ENCODE measurements at regions of chr10 and their contacts with region 1.

Region 1: DNA sequence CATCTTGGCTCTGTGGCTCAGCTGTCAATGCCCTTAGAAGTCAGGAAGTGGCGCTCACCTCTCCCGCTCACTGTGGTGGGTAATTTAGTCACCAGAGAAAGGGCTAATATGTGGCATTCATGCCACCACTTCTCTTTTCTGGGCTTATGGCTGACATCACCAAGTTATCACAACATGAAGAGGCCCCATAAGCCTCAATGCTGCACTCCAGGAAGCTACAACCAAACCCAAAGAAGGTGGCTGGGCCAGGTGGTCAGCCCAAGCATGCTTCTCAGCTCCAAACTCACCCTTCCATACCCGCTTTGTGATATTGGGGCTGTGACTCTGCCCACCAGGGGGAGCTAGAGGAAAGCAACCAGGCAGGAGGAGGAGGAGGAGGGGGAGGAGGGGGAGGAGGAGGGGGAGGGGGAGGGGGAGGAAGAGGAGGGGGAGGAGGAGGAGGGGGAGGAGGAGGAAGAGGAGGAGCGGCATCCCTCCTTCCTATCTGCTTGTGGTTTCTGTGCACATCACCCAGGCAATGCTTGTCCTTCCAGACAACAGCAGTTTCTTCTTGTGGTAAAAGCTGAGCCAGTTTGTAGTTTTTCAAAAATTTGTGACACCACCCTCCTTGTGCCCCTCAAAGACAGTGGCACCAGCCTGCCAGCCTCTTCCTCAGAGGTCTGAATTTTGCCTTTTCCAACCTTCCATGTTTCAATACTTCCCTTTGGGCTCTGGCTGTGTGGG is 42.1 kb downstream of the CYP26A1 start:
- DNase-seq: peak; percentile 74 to 76
- H3K4me3 ChIP-seq: no peak overlapping the region
- H3K27ac ChIP-seq: no peak overlapping the region
- H3K4me1 ChIP-seq: no peaks in the 10 kb centered on the region
- H3K27me3 ChIP-seq: peaks cover 0 to 5% (median 0%) of the 10 kb centered on the region in 3 donors
- CTCF ChIP-seq: peak in 2 of 7 experiments; percentile 23 to 54
- EP300 ChIP-seq: no peak
- POLR2A ChIP-seq: no peak

Region 2: GRCh38 chr10:93288654-93289634 is 173.1 kb after region 1 on chr10:
- intact Hi-C with region 1: loop called (anchors 10 kb)
- DNase-seq: peak; percentile 77 to 91
- H3K4me3 ChIP-seq: no peak overlapping the region
- H3K27ac ChIP-seq: no peak overlapping the region
- H3K4me1 ChIP-seq: no peaks in the 10 kb centered on the region
- H3K27me3 ChIP-seq: no peaks in the 10 kb centered on the region
- CTCF ChIP-seq: peak in 5 of 7 experiments; percentile 61 to 77 (median 72)
- EP300 ChIP-seq: no peak
- POLR2A ChIP-seq: no peak